ENCODE measurements at regions of chr20 and their contacts with region 1.

Region 1: DNA sequence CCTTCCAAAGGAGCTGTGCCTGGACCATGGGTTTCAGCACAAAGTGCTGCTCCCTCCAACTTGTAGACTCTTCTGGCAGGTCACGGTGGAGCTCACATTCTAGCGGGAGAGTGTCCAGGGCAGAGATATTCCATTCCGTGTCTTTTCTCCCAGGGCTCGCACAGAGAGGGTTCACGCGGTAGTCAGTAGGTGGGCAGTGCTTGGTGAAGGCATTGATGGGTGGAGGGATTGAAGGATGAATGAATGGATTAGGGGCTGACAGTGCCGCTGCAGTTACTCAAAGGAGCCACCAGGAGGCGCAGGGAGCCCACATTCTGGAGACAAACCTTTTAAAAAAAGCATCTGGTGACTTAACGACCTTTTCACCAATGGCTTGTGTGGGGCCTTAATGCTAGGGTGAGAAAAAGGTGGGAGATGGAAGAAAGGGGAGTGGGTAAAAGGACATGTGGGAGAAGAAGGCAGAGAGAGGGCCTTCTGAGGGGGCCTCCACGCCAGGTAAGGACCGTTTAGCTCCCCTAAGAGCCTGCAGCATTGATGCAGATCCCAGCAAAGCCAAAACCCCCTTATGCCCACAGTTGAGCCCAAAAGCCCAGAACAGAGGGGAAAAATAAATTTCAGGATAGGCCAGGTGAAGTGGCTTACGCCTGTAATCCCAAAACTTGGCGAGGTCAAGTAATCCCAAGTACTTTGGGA is 17.5 kb upstream of the FAM110A start:
- H3K4me3 Mint-ChIP-seq: no peak overlapping the region
- H3K27ac Mint-ChIP-seq: no peak overlapping the region
- H3K4me1 Mint-ChIP-seq: peaks cover 8% of the 10 kb centered on the region
- H3K27me3 Mint-ChIP-seq: peaks cover 24% of the 10 kb centered on the region

Region 2: DNA sequence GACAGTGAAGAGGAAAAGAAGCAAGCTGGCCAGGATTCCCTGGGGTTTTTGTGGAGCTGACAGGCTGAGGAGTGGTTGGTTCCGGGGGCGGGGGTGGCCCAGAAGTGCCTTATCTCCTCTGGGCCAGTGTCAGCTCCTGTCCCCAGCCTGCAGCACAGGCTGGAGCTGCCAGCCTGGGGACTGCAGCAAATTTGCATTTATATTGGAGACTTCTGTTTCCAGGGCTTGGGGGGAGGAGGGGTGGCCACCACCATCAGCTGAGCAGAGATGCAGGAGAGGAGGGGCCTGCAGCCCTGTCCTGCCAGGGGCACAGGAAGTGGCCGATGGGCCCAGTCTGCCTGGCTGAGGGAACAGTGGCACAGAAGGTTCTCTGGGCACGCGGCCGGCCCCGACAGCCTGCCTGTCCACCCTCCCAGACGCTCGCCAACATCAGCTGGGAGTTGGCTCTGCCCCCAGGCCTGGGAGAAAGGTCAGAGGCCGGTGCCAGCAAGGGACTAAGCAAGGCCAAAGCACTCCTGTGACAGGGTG is 116.2 kb before region 1 on chr20:
- intact Hi-C with region 1: no loop called
- H3K4me3 Mint-ChIP-seq: no peak overlapping the region
- H3K27ac Mint-ChIP-seq: no peak overlapping the region
- H3K4me1 Mint-ChIP-seq: no peaks in the 10 kb centered on the region
- H3K27me3 Mint-ChIP-seq: peaks cover 4% of the 10 kb centered on the region

Region 3: GRCh38 chr20:896501-897034 is 80.5 kb after region 1 on chr20:
- intact Hi-C with region 1: no loop called
- H3K4me3 Mint-ChIP-seq: no peak overlapping the region
- H3K27ac Mint-ChIP-seq: no peak overlapping the region
- H3K4me1 Mint-ChIP-seq: peaks cover 29% of the 10 kb centered on the region
- H3K27me3 Mint-ChIP-seq: peaks cover 9% of the 10 kb centered on the region

Region 4: GRCh38 chr20:956330-956951 is 140.4 kb after region 1 on chr20:
- intact Hi-C with region 1: loop called (anchors 1 kb)
- H3K4me3 Mint-ChIP-seq: no peak overlapping the region
- H3K27ac Mint-ChIP-seq: no peak overlapping the region
- H3K4me1 Mint-ChIP-seq: peaks cover 5% of the 10 kb centered on the region
- H3K27me3 Mint-ChIP-seq: peaks cover 58% of the 10 kb centered on the region

Region 5: GRCh38 chr20:973785-974194 is 157.7 kb after region 1 on chr20:
- intact Hi-C with region 1: loop called (anchors 5 kb)
- H3K4me3 Mint-ChIP-seq: no peak overlapping the region
- H3K27ac Mint-ChIP-seq: no peak overlapping the region
- H3K4me1 Mint-ChIP-seq: no peaks in the 10 kb centered on the region
- H3K27me3 Mint-ChIP-seq: peaks cover 11% of the 10 kb centered on the region

Region 6: GRCh38 chr20:1108437-1108920 is 292.4 kb after region 1 on chr20:
- intact Hi-C with region 1: loop called (anchors 1 kb)
- H3K4me3 Mint-ChIP-seq: no peak overlapping the region
- H3K27ac Mint-ChIP-seq: no peak overlapping the region
- H3K4me1 Mint-ChIP-seq: peaks cover 6% of the 10 kb centered on the region
- H3K27me3 Mint-ChIP-seq: no peaks in the 10 kb centered on the region

Region 7: DNA sequence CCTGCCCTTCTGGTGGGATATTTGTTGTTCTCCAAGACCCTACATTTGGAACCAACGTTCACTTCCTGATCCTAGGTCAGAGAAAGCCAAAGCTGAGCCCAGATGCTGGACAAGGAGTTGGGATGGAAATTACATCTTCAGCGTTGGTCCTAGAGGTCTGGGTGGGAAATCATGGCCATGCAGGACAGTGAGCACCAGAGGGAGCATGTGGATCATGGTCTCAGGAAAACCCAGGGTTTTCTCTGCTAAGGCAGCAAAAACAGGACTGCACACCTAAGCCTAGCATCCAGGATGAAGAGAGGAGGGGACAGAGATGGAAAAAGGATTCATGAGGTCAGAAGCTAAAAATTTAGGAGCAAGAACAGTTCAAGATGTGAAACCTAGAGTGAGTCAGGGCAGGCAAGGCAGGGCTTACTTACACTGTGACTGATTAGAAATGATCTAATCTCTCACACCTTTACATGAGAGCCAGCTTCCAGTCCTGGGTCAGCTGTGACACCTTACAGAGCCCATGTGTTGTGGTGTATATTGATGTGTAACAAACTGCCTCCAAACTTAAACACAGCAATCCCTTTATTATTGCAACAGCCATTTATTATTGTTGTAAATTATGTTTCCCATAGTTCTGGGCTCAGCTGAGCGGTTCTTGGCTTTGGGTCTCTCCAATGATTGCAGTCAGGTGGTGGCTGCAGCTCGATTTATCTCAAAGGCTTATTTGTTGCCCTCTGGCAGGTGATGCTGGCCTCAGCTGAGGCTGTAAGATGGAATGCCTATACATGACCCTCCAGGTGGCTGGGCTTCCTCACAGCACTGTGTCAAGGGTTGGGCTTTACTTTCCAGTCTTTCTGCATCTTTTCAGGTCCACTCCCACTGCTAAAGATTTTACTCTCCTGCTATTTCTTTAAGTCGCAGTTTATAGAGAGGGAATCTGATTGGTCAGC is 393.7 kb after region 1 on chr20:
- intact Hi-C with region 1: loop called (anchors 10 kb)
- H3K4me3 Mint-ChIP-seq: no peak overlapping the region
- H3K27ac Mint-ChIP-seq: no peak overlapping the region
- H3K4me1 Mint-ChIP-seq: no peaks in the 10 kb centered on the region
- H3K27me3 Mint-ChIP-seq: peaks cover 33% of the 10 kb centered on the region

Measured in dendritic cell treated with granulocyte-macrophage colony-stimulating factor and Interleukin-4, amounts not matched to agents 40 ng/mL and 50 ng/mL, for 4 days (primary cell).